ENCODE measurements at regions of chr2 and their contacts with region 1.

Region 1: DNA sequence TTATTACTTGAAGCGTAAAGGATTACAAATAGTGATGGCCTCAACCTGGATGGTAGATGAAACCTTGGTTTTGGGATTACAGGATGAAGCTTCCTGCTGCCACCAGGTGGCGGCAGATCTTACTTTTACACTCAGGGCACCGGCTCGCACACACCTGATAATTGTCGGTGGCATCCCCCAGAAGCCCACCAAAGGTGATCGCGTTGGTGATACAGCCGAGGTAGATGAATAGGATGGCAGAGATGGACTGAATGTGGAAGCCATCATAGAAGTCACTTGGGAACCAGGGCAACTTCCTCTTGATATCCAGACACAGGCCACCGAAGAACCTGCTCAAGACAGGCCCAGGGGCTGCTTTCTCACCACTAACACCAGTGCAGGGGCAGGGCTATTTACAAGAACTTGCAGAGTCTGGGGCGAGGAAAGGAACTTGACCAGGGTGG is 51.8 kb downstream of the MTHFD2 start:
- H3K4me3 ChIP-seq: no peak overlapping the region
- H3K27ac ChIP-seq: no peak overlapping the region
- H3K4me1 ChIP-seq: no peaks in the 10 kb centered on the region
- CTCF ChIP-seq: no peak

Region 2: DNA sequence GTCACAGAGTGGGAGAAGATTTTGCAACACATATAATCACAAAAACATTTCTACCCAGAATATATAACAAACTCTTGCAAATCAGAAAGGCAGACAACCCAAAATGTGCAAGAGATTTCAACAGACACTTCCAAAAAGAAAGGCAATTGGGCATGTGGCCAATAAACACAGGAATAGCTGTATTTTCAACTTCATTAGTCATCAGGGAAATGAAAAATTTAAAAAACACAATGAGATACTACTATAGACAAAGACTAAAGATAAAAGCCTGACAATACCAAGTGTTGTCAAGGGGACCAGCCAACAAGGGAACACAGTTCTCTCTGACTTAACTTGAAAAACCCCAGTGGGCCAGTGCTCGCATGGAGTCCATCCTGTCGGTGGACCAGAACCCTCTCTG is 11.3 kb before region 1 on chr2:
- CTCF ChIA-PET with region 1: interaction called, 20 read pairs
- POLR2A ChIA-PET with region 1: no interaction called
- H3K4me3 ChIP-seq: no peak overlapping the region
- H3K27ac ChIP-seq: no peak overlapping the region
- H3K4me1 ChIP-seq: no peaks in the 10 kb centered on the region
- CTCF ChIP-seq: no peak

Region 3: DNA sequence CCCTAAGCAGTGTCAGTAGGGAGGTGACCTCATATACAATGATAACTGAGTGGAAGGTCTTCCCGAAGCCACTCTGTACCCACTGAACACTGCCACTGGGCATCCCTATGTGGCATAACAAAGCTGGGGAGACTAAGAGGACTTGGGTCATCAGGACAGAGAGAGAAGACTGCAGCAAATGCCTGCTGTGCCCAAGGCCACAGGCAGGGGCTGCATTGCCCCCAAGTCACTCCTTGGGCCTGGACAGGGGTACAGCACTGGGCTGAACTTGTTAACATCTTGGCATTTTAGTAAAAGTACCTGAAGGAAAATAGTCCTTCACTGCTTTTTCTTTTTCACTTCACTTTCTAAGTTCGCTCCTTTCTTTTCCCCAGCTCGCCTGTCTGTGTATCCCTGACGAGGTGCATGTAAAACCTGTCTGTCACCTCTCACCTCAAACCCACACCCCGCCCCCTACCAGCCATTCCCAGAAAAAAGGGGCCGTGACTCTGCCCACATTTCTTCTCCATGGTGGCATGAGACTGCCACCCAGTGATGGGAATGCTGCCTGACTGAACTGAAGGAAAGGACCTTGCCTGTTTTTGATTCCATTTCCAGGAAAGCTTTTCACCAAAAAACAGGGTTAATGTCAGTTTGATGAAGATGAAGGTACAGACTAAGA is 11.1 kb after region 1 on chr2:
- CTCF ChIA-PET with region 1: interaction called, 17 read pairs
- POLR2A ChIA-PET with region 1: no interaction called
- H3K4me3 ChIP-seq: no peak overlapping the region
- H3K27ac ChIP-seq: no peak overlapping the region
- H3K4me1 ChIP-seq: no peaks in the 10 kb centered on the region
- CTCF ChIP-seq: peak; percentile 83

Region 4: DNA sequence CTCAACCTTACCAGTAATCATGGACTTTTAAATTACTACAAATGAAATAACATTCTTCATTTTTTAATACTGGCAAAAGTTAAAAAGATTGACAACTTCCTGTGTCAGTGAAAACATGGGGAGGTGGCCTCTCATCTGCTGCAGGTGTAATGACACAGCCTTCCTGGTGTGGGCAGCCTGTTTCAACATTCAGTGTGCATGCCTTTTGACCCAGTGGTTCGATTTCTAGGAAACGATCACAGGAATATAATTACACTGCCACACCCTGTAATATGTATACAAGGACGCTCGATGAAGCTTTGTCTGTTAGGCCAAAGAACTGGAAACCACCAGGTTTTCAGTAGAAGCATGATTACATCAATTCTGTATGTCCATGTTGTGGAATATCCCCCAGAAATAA is 16.9 kb after region 1 on chr2:
- CTCF ChIA-PET with region 1: interaction called, 17 read pairs
- POLR2A ChIA-PET with region 1: no interaction called
- H3K4me3 ChIP-seq: no peak overlapping the region
- H3K27ac ChIP-seq: no peak overlapping the region
- H3K4me1 ChIP-seq: peaks cover 3% of the 10 kb centered on the region; the same call in 1 of the 2 replicates
- CTCF ChIP-seq: 0 out of 2 replicates have a peak, but pooled peaks have one; percentile 18